Colonic mucosa (tissue), 4 donors: ENCODE measurements at regions of chr3 and their contacts with region 1.

Region 1: GRCh38 chr3:38117748-38118420 is 19.0 kb downstream of the ACAA1 start:
- DNase-seq: peak; percentile 78
- H3K4me3 ChIP-seq: no peak overlapping the region
- H3K27ac ChIP-seq: no peak overlapping the region
- H3K4me1 ChIP-seq: no peaks in the 10 kb centered on the region
- H3K27me3 ChIP-seq: no peaks in the 10 kb centered on the region
- CTCF ChIP-seq: peak; percentile 77

Region 2: DNA sequence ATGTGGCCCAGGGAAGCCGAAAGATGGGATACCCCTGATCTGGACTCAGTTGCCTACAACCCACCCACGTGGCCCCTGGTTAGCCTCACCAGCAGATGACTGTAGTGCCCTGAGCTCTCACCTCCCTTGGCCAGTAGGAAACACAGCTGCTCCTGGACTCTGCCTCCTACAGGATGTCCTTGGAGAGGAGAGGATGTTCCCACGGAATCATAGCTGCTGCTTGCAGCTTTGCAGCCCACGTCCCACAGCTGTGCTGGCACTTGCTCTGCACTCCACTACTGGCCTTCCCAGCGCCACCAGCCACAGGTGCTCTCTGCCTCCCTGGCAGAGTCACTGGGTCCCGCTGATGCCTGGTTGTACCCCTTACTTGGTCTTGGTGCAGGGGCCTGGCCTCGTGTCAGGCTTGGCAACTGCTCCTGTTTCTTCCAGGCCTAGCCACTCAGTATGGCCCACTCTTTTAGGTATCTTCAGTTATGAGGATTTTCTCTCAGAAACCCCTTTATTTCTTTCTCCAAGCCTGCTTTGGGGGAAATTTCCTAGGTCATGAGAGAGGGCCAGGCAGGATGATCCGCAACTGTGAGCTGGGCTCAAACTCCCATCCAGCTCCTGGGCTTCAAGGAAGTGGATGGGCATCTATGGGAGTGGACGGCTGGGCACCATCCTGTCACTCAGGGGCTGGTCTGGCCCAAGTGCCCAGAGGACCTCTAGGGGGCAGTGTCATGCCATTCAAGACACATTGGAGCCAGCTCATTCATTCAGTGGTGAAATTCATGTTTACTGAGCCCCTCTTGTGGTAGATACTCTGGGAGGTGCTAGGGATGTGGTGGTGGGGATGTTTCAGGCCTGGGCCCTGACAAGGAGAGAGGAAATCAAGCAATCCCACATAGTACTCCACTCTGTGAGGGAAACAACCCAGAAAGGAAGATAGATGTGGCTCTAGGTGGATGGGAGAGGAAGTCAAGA is 143.5 kb before region 1 on chr3:
- intact Hi-C with region 1: loop called (anchors 10 kb)
- DNase-seq: peak; percentile 83
- H3K4me3 ChIP-seq: no peak overlapping the region
- H3K27ac ChIP-seq: no peak overlapping the region
- H3K4me1 ChIP-seq: no peaks in the 10 kb centered on the region
- H3K27me3 ChIP-seq: no peaks in the 10 kb centered on the region
- CTCF ChIP-seq: peak; percentile 83